Endothelial cell of umbilical vein (primary cell): ENCODE measurements at regions of chr17 and their contacts with region 1.

Region 1: DNA sequence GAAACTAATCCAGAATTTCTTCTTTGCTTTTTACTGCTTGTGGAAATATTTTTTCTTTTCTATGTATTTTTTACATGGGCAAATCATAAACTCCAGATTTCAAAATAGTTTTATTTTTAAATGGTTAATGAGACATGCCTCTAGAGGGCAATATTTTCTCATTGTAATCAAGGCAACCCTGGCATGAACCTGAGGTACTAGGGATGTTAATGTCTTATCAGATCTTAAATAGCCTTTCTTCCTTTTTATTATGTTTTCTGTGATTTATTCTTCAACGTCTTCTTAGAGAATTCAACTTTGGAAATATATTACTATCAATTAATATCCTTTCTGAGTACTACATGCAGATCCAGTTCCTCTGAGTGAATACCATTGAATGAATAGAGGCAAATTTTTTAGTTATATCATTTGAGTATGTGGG is 324.7 kb downstream of the BCAS3 start:
- DNase-seq: peak; percentile 46
- H3K4me3 ChIP-seq: no peak overlapping the region
- H3K27ac ChIP-seq: no peak overlapping the region
- H3K4me1 ChIP-seq: no peaks in the 10 kb centered on the region
- H3K27me3 ChIP-seq: peaks cover 1 to 6% of the 10 kb centered on the region in 2 experiments
- CTCF ChIP-seq: peak in 1 of 2 donors; percentile 20
- POLR2A ChIP-seq: no peak

Region 2: GRCh38 chr17:61251939-61252896 is 249.9 kb after region 1 on chr17:
- CTCF ChIA-PET with region 1: no interaction called
- POLR2A ChIA-PET with region 1: no interaction called
- dilution Hi-C with region 1: no loop called
- intact Hi-C with region 1: loop called (anchors 10 kb)
- DNase-seq: peak; percentile 88
- H3K4me3 ChIP-seq: no peak overlapping the region
- H3K27ac ChIP-seq: no peak overlapping the region
- H3K4me1 ChIP-seq: peaks cover 14% of the 10 kb centered on the region
- H3K27me3 ChIP-seq: peaks cover 3 to 6% of the 10 kb centered on the region in 2 experiments
- CTCF ChIP-seq: no peak
- POLR2A ChIP-seq: no peak

Region 3: DNA sequence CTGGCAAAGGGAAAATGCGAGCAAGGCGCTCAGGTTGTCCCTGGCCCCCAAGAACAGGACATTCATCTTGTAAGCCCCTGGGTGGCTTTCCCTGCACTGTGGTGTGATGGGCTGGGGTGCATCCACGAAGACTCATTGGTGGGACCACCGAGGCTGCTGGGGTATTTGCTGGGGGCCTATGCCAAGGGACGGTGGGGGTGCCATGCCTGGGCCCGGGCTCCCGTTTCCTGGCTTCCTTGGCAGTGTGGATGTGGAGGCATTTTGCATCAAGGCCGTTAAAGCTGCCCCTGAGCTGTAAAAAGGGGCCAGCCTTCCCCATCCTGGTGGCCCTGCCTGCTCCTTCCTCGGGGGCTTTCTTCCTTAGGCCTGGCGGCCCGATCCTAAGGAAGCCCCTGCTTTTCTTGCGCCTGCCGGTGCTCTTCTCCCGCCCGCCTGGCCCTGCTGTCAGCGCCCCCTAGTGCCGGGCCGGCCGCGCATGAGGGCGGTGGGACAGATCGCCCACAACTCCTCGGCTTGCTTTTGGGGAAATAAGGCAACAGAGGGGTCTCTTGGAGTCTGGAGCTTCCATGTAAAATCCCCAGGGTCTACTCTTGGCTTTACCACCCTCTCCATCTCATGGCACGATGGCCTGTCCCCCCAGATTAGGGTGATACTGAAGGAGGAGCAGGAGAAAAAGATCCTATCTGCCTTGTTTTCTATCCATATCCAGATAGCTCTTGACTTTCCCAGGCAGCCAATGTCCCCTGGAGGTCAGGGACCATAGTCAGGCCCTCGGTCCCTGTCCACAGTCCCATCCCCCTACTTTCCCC is 387.5 kb after region 1 on chr17:
- CTCF ChIA-PET with region 1: interaction called, 7 read pairs
- POLR2A ChIA-PET with region 1: no interaction called
- dilution Hi-C with region 1: no loop called
- intact Hi-C with region 1: loop called (anchors 1 kb)
- DNase-seq: peak; percentile 39
- H3K4me3 ChIP-seq: no peak overlapping the region
- H3K27ac ChIP-seq: no peak overlapping the region
- H3K4me1 ChIP-seq: no peaks in the 10 kb centered on the region
- H3K27me3 ChIP-seq: peaks cover 7% of the 10 kb centered on the region in 2 experiments
- CTCF ChIP-seq: peak; percentile 93 to 94
- POLR2A ChIP-seq: no peak